SK-MEL-5 (cell line): ENCODE measurements at regions of chr3 and their contacts with region 1.

Region 1: GRCh38 chr3:133910422-133910821 is 14.7 kb upstream of the RAB6B start:
- DNase-seq: peak; percentile 31

Region 2: DNA sequence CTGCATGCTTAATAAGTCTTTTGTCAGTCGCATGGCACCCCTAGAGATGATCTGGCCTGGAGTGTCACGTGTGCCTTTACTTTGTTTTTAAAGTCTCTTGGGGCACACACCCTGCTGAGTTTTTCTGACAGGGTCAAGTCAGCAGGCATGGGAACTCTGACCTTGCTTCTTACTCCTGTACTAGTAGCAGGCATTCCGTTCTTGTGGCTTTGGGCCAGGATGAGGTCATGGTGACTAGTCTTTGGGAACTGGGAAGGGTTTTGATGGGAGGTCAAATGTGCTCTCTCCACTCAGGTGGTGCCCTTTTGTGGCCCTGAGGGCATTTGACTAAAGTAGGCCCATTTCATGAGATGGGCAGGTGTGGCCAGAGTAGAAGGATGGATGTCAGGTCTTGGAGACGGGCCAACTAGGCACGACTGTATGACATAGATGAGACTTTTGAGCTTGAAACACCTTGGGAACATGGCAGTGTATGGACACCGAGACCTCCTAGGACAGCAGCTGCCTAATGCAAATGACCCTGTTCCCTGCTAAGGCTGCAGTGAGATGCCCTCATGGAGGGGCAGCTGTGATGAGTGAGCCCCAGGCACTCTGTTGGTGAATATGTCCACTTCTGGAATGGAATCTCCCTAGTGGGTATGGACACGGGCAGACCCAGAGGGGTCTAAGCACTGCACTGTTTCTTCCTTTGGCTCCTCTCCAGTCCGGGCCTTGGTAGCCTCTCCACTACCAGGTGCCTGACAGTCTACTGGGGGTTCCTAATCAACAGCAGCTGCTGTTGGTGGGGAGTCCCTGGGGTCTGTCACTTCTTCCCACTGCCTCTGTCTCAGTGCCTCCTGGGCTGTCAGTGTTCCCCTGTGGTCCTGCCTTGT is 88.4 kb before region 1 on chr3:
- in situ Hi-C with region 1: loop called (anchors 10 kb)
- DNase-seq: peak; percentile 59

Region 3: DNA sequence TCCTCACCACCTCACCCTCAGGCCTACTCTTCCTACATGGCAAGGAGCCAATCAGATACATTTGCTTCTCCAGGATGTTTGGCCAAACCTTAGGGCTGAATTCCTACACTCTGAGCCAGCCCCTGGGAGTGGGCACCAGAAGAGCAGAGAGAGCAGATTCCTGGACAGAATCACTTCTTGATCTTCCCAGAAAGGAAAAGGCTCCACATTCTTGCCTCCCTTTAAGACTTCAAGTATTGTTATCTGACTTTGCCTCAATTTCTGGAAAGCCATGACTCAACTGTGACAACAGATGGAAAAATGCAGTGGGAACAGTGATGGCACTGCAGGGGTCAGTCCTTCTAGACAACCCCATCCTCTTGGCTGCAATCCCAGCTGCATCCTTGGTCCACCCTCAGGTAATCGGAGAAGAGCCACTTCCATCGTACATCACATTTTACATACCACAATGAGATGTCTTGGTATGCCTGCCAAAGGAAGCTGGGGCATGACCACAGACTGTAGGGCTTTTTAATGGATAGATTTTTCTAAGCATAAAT is 98.3 kb after region 1 on chr3:
- in situ Hi-C with region 1: no loop called
- DNase-seq: no peak